HEK293 (cell line): ENCODE measurements at regions of chr12 and their contacts with region 1.

Region 1: DNA sequence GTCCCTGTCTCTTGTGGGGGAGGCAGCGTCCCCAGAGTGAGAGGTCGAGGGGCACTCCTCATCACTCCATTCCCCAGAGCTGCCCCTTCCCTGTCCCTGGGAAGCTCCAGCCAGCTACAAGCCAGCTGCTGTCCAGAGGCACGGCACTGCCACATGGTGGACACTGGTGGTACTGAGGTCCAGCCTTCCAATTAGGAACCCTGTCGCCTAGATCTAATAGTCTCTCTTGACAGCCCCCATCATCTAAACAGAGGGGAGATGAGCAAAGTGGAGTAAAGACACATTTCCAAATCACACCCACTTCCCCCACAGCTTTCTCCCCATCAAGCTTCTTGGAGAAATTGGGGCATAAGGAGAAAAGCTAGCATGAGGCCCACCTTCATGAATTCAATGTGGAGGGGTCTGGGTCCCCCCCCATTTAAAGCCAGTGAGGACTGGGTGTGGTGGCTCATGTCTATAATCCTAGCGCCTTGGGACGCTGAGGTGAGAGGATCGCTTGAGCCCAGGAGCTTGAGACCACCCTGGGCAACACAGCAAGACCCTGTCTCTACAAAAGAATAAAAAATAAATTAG is 2.1 kb upstream of the INHBE start:
- H3K4me3 ChIP-seq: no peak overlapping the region
- H3K27ac ChIP-seq: no peak overlapping the region
- H3K4me1 ChIP-seq: peaks cover 7% of the 10 kb centered on the region; the same call in 1 of the 2 replicates
- CTCF ChIP-seq: peak; percentile 85

Region 2: DNA sequence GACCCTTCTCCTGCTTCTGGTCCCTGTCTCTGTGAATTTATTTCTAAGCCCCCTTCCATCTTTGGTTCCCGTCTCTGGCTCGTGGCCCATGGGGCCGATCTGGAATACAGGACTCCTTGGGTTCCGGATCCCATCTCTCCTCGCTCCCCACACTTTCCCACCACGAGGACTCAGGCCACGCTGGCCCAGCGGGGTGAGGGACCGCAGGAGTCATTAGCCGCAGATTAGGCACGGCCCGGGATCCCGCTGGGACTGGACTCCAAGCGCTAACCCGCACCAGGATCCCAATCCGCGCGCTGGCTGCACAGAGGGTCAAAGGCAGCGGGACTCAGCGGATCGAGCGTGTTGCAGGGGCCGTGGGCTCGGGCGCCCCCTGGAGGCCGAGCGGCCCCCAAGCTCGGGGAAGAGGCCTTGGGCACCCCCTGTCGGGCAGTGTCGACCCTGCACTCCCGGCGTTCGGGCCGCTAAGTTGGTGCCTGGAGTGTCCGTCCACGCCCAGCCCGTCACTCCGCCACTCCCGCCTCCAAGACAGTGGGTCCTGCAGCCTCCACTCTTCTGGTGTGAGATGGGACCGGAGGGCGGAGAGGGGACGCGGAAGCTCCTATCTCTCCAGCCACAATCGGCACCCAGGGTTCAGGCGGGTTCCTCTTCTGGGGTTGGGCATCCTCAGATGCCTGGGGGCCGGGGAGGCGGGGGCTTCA is 214.0 kb before region 1 on chr12:
- CTCF ChIA-PET with region 1: interaction called, 48 read pairs
- POLR2A ChIA-PET with region 1: interaction called, 10 read pairs
- H3K4me3 ChIP-seq: no peak overlapping the region; the same call in 1 of the 2 replicates
- H3K27ac ChIP-seq: no peak overlapping the region; the same call in 1 of the 2 replicates
- H3K4me1 ChIP-seq: peaks cover 17% of the 10 kb centered on the region
- CTCF ChIP-seq: peak; percentile 100

Region 3: GRCh38 chr12:57270966-57271470 is 182.0 kb before region 1 on chr12:
- CTCF ChIA-PET with region 1: interaction called, 151 read pairs
- POLR2A ChIA-PET with region 1: interaction called, 3 read pairs
- H3K4me3 ChIP-seq: no peak overlapping the region
- H3K27ac ChIP-seq: no peak overlapping the region
- H3K4me1 ChIP-seq: no peaks in the 10 kb centered on the region
- CTCF ChIP-seq: peak; percentile 20; the same call in 1 of the 2 replicates

Region 4: GRCh38 chr12:57299514-57300016 is 153.5 kb before region 1 on chr12:
- CTCF ChIA-PET with region 1: interaction called, 219 read pairs
- POLR2A ChIA-PET with region 1: no interaction called
- H3K4me3 ChIP-seq: no peak overlapping the region
- H3K27ac ChIP-seq: no peak overlapping the region
- H3K4me1 ChIP-seq: peaks cover 6% of the 10 kb centered on the region
- CTCF ChIP-seq: no peak

Region 5: DNA sequence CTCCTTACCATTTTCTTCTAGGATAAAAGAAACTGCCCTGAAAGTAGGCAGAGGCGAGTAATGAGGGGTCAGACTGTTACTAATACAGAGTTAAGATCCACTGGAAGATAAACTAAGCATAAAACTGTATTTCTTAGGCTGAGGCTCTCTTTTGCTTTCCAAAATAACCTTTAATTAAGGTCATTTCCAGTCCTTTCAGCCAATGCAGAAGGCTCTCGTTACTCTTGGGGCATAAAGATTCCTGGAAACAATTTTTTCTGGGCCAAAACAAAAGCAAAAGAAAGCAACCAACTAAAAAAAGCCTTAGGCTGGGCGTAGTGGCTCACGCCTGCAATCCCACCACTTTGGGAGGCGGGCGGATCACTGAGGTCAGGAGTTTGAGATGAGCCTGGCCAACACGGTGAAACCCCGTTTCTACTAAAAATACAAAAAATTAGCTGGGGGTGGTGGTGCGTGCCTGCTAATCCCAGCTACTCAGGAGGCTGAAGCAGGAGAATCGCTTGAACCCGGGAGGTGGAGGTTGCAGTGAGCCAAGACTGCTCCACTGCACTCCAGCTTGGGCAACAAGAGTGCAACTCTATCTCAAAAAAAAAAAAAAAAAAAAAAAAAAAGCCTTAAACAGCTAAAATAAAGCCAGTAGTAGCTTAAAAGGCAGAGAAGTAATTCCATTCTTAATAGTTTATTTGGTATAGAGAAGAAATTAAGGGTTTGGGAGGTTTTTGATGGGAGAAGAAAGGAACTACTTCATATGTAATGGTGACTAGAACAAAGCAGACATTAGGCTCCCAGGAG is 133.1 kb before region 1 on chr12:
- CTCF ChIA-PET with region 1: interaction called, 219 read pairs
- POLR2A ChIA-PET with region 1: interaction called, 10 read pairs
- H3K4me3 ChIP-seq: no peak overlapping the region
- H3K27ac ChIP-seq: 0 out of 2 replicates have a peak overlapping the region, but pooled peaks have one; percentile 16
- H3K4me1 ChIP-seq: peaks cover 11% of the 10 kb centered on the region
- CTCF ChIP-seq: no peak

Region 6: GRCh38 chr12:57430931-57431720 is 21.9 kb before region 1 on chr12 and contains the start of gene R3HDM2:
- CTCF ChIA-PET with region 1: interaction called, 45 read pairs
- POLR2A ChIA-PET with region 1: interaction called, 3 read pairs
- H3K4me3 ChIP-seq: peak within 1 kb of the TSS; percentile 47
- H3K27ac ChIP-seq: peak within 1 kb of the TSS; percentile 88
- H3K4me1 ChIP-seq: no peaks in the 10 kb centered on the region; the same call in 1 of the 2 replicates
- CTCF ChIP-seq: no peak